Activated CD4-positive, alpha-beta T cell treated with anti-CD3 and anti-CD28 coated beads, Interleukin-2, amount 10 ng/mL, durations not matched to agents 24 days and 14 days (primary cell): ENCODE measurements at regions of chr20 and their contacts with region 1.

Region 1: GRCh38 chr20:407133-407952 is 756 bp upstream of the RBCK1 start:
- DNase-seq: peak; percentile 91
- H3K4me3 Mint-ChIP-seq: peak overlapping the region; percentile 82
- H3K27ac Mint-ChIP-seq: peak overlapping the region; percentile 89
- H3K4me1 Mint-ChIP-seq: peaks cover 45% of the 10 kb centered on the region
- H3K27me3 Mint-ChIP-seq: no peaks in the 10 kb centered on the region

Region 2: DNA sequence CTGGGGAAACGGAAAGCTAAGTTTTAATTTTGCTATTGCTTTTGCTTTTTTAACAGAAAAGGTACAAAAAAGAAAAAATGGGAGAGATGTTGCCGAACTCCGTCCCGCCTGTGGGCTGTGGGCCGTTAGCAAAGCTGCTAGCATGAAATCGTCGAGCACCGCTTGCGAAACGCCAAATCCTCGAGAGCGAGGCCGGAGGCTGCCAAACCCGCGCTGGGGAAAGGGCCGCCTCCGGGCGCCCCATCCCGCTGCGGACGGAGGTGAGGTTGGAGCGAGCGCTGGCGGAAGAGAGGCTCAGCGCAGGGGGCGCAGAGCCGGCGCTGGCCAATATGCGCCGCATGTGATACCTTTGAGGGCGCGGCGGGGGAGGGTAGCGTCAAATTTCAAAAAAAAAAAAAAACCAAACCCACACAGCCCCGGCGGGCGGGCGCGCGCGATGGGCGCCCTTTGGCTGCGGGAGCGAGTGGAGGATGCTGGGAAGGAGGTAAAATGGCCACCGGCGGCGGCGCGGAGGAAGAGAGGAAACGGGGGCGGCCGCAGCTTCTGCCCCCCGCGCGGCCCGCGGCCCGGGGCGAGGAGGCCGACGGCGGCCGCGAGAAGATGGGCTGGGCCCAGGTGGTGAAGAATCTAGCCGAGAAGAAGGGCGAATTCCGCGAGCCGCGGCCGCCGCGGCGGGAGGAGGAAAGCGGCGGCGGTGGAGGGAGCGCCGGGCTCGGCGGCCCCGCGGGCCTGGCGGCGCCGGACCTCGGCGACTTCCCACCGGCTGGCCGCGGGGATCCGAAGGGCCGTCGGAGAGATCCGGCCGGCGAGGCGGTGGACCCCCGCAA is 110.0 kb before region 1 on chr20 and contains the start of gene ZCCHC3:
- intact Hi-C with region 1: loop called (anchors 2 kb)
- DNase-seq: peak; percentile 96
- H3K4me3 Mint-ChIP-seq: peak within 1 kb of the TSS; percentile 98
- H3K27ac Mint-ChIP-seq: peak within 1 kb of the TSS; percentile 100
- H3K4me1 Mint-ChIP-seq: peaks cover 40% of the 10 kb centered on the region
- H3K27me3 Mint-ChIP-seq: peaks cover 1% of the 10 kb centered on the region
- total RNA-seq, gene ZCCHC3: 23.7 and 24.6 TPM in 2 replicates

Region 3: DNA sequence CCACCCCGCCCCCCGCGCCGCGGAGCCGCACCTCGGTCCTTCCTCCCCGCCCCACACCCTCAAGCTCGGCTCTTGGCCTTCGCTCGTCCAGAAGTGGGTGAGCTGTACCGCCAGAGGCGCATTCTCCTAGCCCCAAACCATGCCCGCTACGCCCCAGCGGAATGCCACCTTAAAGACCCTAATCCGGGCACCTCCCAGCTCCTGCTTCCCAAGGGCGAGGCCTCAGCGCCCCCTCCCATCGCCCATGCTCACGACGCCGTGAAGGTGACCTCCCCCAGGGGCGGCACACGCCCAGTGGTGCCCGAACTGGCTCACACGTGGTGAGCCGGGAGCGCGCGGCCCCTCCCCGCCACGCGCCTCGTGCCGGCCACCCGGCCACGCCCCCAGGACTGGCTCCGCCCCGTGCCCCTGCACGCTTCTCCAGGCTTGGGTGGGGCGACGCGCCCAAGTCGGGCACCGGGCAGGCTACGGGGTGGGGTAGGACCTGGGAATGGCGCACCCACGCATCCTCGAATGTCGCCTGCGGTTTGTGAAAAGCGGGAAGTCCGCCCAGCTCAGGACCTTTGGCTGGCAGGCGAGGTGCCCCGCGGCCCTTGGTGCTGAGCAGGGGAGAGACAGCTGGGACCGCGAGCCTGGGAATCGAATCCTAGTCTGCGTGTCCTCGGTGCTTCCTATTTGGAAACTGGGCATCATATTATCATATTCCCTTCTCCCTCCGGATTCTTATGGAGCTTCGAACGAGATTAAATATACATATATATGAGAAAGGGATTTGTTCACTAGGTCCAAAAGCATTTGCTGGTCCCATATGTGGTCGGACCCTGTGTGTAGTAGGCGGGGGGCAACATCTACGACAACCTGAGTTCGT is 82.9 kb before region 1 on chr20:
- intact Hi-C with region 1: no loop called
- DNase-seq: peak; percentile 98
- H3K4me3 Mint-ChIP-seq: peak overlapping the region; percentile 91
- H3K27ac Mint-ChIP-seq: peak overlapping the region; percentile 92
- H3K4me1 Mint-ChIP-seq: peaks cover 16% of the 10 kb centered on the region
- H3K27me3 Mint-ChIP-seq: peaks cover 6% of the 10 kb centered on the region

Region 4: DNA sequence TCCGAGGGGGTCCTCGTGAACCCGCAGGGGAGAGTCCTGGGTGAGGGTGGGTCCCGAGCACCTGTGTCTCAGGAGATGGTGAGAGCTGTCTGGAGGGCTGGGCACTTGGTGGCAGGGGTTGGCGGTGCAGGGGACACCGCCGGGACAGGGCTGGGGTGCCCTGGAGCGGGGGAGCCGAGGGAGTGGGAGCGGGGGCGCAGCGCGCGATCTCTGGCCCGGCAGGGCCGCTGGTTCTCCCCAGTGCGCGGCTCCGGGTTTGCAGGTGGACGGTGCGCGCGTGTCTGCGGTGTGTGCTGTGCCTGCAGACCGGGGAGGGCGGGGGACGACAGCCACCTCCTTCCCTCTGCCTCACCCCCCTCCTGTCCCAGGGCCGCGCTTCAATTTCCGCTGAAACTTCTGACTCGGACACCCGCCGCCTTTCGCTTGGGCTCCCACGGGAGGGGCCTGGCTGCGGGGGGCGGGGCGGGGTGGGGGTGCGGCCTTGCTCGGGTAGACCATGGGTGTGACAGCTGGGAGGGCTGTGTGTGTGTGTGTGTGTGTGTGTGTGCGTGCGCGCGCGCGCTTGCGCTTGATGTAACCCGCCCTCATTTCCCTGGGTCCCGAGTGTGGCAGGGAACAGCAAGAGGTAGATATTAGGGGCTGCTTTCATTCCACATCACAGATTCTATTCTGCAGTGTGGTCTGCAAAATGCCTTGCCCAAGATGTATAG is 25.6 kb before region 1 on chr20:
- intact Hi-C with region 1: loop called (anchors 2 kb)
- DNase-seq: peak; percentile 94
- H3K4me3 Mint-ChIP-seq: peak overlapping the region; percentile 85
- H3K27ac Mint-ChIP-seq: peak overlapping the region; percentile 85
- H3K4me1 Mint-ChIP-seq: peaks cover 30% of the 10 kb centered on the region
- H3K27me3 Mint-ChIP-seq: no peaks in the 10 kb centered on the region

Region 5: GRCh38 chr20:396619-397431 is 10.5 kb before region 1 on chr20:
- intact Hi-C with region 1: no loop called
- DNase-seq: no peak
- H3K4me3 Mint-ChIP-seq: no peak overlapping the region
- H3K27ac Mint-ChIP-seq: no peak overlapping the region
- H3K4me1 Mint-ChIP-seq: peaks cover 12% of the 10 kb centered on the region
- H3K27me3 Mint-ChIP-seq: no peaks in the 10 kb centered on the region

Region 6: GRCh38 chr20:433300-433975 is 26.1 kb after region 1 on chr20:
- intact Hi-C with region 1: loop called (anchors 1 kb)
- DNase-seq: peak; percentile 87
- H3K4me3 Mint-ChIP-seq: peak overlapping the region; percentile 78
- H3K27ac Mint-ChIP-seq: peak overlapping the region; percentile 97
- H3K4me1 Mint-ChIP-seq: peaks cover 65% of the 10 kb centered on the region
- H3K27me3 Mint-ChIP-seq: no peaks in the 10 kb centered on the region

Region 7: DNA sequence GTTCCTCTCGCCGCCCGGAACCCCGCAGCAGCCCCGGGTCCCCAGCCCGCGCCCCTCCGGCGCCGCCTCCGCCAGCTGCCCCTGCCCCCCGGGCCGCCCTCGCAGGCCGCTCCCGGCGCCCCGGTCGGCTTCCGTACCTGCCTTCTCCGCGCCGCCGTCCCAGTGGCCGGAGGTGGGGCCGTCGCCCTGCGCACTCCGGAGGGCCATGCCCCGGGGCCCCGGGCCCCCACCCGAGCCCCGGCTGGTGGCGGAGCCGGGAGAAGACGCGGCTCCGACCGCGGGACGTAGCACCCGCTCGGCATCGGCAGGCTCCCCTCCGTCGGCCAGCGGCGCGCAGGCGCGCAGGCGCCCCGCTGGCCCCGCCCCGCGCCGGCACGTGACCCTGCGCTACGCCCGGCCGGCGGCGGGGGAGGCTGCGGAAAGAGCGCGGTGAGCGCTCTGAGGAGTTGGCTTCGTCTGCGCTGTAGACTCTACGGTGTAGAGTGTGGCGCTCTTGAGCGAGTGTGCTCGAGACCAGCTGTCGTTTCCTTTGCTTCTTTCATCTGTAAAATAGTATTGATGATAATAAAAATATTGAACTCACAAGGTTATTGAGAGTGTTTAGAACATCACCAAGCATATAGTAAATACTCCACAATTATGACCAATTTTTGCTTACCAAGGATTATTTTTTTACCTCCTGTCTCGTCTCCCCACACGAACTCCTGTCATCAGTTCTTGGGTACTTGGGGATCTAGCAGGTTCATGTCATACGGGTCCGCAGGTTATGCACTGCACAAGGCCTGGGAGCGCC is 55.1 kb after region 1 on chr20 and contains the start of gene TBC1D20:
- intact Hi-C with region 1: loop called (anchors 2 kb)
- DNase-seq: peak; percentile 96
- H3K4me3 Mint-ChIP-seq: peak within 1 kb of the TSS; percentile 95
- H3K27ac Mint-ChIP-seq: peak within 1 kb of the TSS; percentile 92
- H3K4me1 Mint-ChIP-seq: peaks cover 41% of the 10 kb centered on the region
- H3K27me3 Mint-ChIP-seq: peaks cover 2% of the 10 kb centered on the region
- total RNA-seq, gene TBC1D20: 34.3 and 35.4 TPM in 2 replicates

Region 8: GRCh38 chr20:478949-479429 is 71.6 kb after region 1 on chr20:
- intact Hi-C with region 1: loop called (anchors 1 kb)
- DNase-seq: peak; percentile 86
- H3K4me3 Mint-ChIP-seq: no peak overlapping the region
- H3K27ac Mint-ChIP-seq: peak overlapping the region; percentile 52
- H3K4me1 Mint-ChIP-seq: peaks cover 31% of the 10 kb centered on the region
- H3K27me3 Mint-ChIP-seq: no peaks in the 10 kb centered on the region

Region 9: GRCh38 chr20:543369-544152 is 136.2 kb after region 1 on chr20 and contains the start of gene CSNK2A1:
- intact Hi-C with region 1: loop called (anchors 5 kb)
- DNase-seq: peak; percentile 99
- H3K4me3 Mint-ChIP-seq: peak within 1 kb of the TSS; percentile 88
- H3K27ac Mint-ChIP-seq: peak within 1 kb of the TSS; percentile 97
- H3K4me1 Mint-ChIP-seq: peaks cover 38% of the 10 kb centered on the region
- H3K27me3 Mint-ChIP-seq: peaks cover 9% of the 10 kb centered on the region
- total RNA-seq, gene CSNK2A1: 179 TPM in 2 replicates